ENCODE measurements at regions of chr7 and their contacts with region 1.

Region 1: DNA sequence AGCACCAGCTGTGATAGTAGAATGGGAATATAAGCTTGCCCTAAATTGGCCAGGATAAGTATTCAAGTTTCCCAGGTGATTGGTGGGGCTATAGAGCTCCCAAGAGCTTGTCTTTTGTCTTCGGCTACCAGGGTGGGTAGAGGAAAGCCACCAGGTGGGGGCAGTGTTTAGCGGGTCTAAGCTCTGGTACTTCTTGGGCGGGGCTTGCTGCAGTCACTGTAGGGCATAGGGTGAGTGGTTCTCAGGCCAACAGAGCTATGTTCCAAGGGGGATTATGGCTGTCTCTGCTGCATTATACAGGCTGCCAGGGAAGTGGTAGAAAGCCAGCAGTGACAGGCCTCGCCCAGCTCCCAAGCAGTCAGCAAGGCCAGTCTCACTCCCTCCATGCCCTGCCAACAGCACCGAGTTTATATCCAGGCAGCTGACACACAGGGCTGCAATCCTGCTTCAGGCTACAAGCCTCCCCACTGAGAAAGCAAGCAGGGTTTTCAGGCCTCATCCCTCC is 110.7 kb downstream of the ZNF467 start:
- DNase-seq: peak; percentile 71
- H3K4me3 Mint-ChIP-seq: no peak overlapping the region
- H3K27ac Mint-ChIP-seq: no peak overlapping the region
- H3K4me1 Mint-ChIP-seq: no peaks in the 10 kb centered on the region
- H3K27me3 Mint-ChIP-seq: peaks cover 51% of the 10 kb centered on the region

Region 2: DNA sequence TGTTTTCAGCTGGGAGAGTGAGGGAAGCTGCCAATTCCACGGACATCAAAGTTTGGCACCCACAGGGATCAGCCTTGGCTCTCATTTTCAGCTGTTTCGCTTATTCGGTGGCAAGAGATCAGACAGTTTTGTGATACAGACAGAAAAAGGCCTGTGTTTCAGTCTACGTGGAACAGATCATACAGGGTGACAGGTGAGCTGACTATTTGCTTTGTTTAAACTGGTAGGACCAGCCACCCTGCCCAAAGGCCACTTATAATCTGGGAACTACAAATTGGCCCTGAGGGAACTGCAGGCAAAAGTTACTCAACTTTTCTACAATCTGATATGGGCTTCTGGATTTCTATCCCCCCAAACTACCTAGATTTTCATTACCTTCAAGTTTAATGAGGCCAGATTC is 17.9 kb before region 1 on chr7:
- CTCF ChIA-PET with region 1: interaction called, 15 read pairs
- POLR2A ChIA-PET with region 1: no interaction called
- DNase-seq: no peak
- H3K4me3 Mint-ChIP-seq: no peak overlapping the region
- H3K27ac Mint-ChIP-seq: no peak overlapping the region
- H3K4me1 Mint-ChIP-seq: no peaks in the 10 kb centered on the region
- H3K27me3 Mint-ChIP-seq: peaks cover 20% of the 10 kb centered on the region

Region 3: DNA sequence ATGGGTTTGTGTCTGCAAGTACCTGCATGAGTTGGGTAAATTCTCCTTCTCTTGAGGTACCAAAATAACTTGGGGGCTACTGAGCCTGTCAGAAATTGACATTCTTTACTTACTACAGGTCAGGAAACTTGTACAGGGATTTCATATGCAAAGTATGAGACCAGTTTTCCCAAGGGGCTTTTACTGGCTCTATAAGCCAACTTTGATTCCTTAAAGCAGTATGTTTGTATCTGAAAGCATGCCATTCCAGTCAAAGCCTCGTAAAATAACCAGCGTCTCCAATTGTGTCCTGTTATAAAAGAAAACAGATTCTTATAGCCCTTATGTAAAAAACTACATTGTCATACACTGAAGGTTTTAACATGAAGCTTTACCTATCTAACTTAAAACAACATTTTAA is 20.5 kb after region 1 on chr7:
- CTCF ChIA-PET with region 1: interaction called, 11 read pairs
- POLR2A ChIA-PET with region 1: no interaction called
- DNase-seq: no peak
- H3K4me3 Mint-ChIP-seq: no peak overlapping the region
- H3K27ac Mint-ChIP-seq: no peak overlapping the region
- H3K4me1 Mint-ChIP-seq: no peaks in the 10 kb centered on the region
- H3K27me3 Mint-ChIP-seq: peaks cover 44% of the 10 kb centered on the region

Region 4: GRCh38 chr7:149742075-149742701 is 79.5 kb after region 1 on chr7:
- CTCF ChIA-PET with region 1: interaction called, 49 read pairs
- POLR2A ChIA-PET with region 1: no interaction called
- DNase-seq: peak; percentile 58
- H3K4me3 Mint-ChIP-seq: peak overlapping the region; percentile 24
- H3K27ac Mint-ChIP-seq: no peak overlapping the region
- H3K4me1 Mint-ChIP-seq: peaks cover 11% of the 10 kb centered on the region
- H3K27me3 Mint-ChIP-seq: peaks cover 37% of the 10 kb centered on the region

Measured in activated CD4-positive, alpha-beta memory T cell treated with anti-CD3 and anti-CD28 coated beads, Interleukin-2, amount 10 ng/mL, durations not matched to agents 7 days and 5 days (primary cell).